B cell (primary cell): ENCODE measurements at regions of chr2 and their contacts with region 1.

Region 1: DNA sequence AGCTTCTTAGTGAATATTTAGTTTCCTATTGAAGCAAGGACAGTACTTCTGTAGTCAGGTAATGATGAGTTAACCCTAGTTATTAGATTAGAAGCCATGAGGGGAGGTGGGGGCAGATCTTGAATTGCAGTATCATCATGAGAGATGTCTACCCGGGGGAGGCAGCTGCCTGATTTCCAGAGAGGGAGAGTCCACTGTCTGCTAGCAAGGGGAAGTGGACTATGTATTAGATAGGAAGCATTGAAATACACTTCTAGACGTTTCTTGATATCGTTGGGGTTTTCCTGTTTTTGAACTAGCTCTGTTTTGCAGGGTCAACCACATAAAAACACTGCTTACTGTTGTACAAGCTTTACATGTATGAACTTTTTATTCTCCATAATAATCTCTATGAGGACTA is 38.8 kb downstream of the APLF start:
- DNase-seq: no peak
- ATAC-seq: no peak
- H3K4me3 ChIP-seq: no peak overlapping the region
- H3K4me3 Mint-ChIP-seq: no peak overlapping the region
- H3K27ac ChIP-seq: no peak overlapping the region
- H3K27ac Mint-ChIP-seq: no peak overlapping the region
- H3K4me1 ChIP-seq: no peaks in the 10 kb centered on the region
- H3K4me1 Mint-ChIP-seq: no peaks in the 10 kb centered on the region
- H3K27me3 ChIP-seq: no peaks in the 10 kb centered on the region
- H3K27me3 Mint-ChIP-seq: no peaks in the 10 kb centered on the region
- CTCF ChIP-seq: no peak

Region 2: GRCh38 chr2:68565858-68566257 is 59.7 kb after region 1 on chr2:
- CTCF ChIA-PET with region 1: no interaction called
- POLR2A ChIA-PET with region 1: no interaction called
- intact Hi-C with region 1: loop called (anchors 10 kb)
- DNase-seq: no peak
- ATAC-seq: no peak
- H3K4me3 ChIP-seq: no peak overlapping the region
- H3K4me3 Mint-ChIP-seq: no peak overlapping the region
- H3K27ac ChIP-seq: no peak overlapping the region
- H3K27ac Mint-ChIP-seq: no peak overlapping the region
- H3K4me1 ChIP-seq: no peaks in the 10 kb centered on the region
- H3K4me1 Mint-ChIP-seq: no peaks in the 10 kb centered on the region
- H3K27me3 ChIP-seq: no peaks in the 10 kb centered on the region
- H3K27me3 Mint-ChIP-seq: no peaks in the 10 kb centered on the region
- CTCF ChIP-seq: no peak